ENCODE measurements at regions of chr13 and their contacts with region 1.

Region 1: GRCh38 chr13:94362411-94362909 is 117.0 kb downstream of the DCT start:
- DNase-seq: peak; percentile 69
- H3K4me3 Mint-ChIP-seq: no peak overlapping the region
- H3K27ac Mint-ChIP-seq: no peak overlapping the region
- H3K4me1 Mint-ChIP-seq: peaks cover 2% of the 10 kb centered on the region
- H3K27me3 Mint-ChIP-seq: peaks cover 10% of the 10 kb centered on the region

Region 2: DNA sequence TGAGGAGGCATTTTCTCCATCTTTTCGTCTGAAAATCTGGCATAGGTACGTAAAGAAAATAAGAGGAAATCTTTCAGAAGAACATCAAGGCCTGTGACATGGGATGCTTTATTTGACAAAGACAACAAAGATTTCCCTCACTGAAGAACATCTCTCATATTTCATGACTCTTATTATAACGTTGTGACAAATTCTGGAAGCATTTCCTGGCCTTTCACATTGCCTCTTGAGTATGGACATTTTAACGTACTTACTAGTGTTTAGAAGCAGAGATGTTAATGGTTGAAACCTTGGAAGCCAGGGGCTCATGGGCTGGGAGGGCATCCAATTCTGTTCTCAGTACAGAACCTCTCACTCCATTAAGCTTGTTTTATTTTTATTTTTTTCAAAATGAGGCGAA is 93.8 kb before region 1 on chr13:
- CTCF ChIA-PET with region 1: no interaction called
- POLR2A ChIA-PET with region 1: no interaction called
- DNase-seq: no peak
- H3K4me3 Mint-ChIP-seq: no peak overlapping the region
- H3K27ac Mint-ChIP-seq: no peak overlapping the region
- H3K4me1 Mint-ChIP-seq: no peaks in the 10 kb centered on the region
- H3K27me3 Mint-ChIP-seq: no peaks in the 10 kb centered on the region

Region 3: GRCh38 chr13:94345374-94346195 is 16.9 kb before region 1 on chr13:
- CTCF ChIA-PET with region 1: interaction called, 12 read pairs
- POLR2A ChIA-PET with region 1: no interaction called
- DNase-seq: no peak
- H3K4me3 Mint-ChIP-seq: no peak overlapping the region
- H3K27ac Mint-ChIP-seq: no peak overlapping the region
- H3K4me1 Mint-ChIP-seq: peaks cover 9% of the 10 kb centered on the region
- H3K27me3 Mint-ChIP-seq: peaks cover 2% of the 10 kb centered on the region

Measured in activated CD4-positive, alpha-beta memory T cell treated with anti-CD3 and anti-CD28 coated beads, Interleukin-2, amount 10 ng/mL, durations not matched to agents 7 days and 5 days (primary cell).